ENCODE measurements at regions of chr1 and their contacts with region 1.

Region 1: GRCh38 chr1:218330043-218330623 is 15.0 kb upstream of the TGFB2 start:
- DNase-seq: no peak
- ATAC-seq: peak; percentile 47

Region 2: DNA sequence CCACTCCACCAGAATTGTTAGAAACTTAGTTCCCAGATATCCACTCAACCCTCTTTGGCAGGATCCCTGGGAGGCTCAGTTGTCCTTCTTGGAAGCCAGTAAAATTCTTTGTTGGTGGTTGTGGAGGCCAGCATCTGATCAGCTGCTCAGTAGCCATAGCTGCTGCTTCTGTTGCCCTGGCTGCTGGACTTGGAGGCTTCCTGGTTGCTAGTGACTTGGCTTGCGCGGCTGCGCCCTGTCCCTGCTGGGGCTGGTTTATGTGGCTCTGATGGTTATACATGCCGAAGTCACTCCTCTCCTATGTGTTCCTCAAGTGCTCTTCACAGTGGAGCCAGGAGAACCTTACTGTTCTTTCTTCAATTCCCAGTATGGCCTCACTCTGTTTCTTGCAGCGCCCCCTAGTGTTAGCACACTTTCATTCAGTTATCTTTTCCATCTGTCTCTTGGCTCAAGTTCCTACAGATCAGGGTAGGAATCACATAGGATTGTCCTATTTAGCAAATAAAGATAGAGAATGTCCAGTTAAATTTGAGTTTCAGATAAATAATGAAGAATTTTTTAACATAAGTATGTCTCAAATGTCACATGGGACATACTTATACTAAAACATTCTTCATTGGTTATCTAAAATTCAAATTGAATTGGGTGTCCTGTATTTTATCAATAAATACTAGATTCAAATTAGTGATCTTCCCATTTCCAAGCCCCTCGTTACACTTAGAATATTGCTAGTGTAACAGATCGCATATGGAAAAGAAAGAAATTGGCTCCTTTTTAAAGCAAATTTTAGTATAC is 191.4 kb after region 1 on chr1:
- intact Hi-C with region 1: loop called in 1 of 2 experiments (anchors 5 kb)
- DNase-seq: peak in 1 of 2 donors; percentile 51
- ATAC-seq: no peak

Region 3: GRCh38 chr1:219416594-219417238 is 1086.6 kb after region 1 on chr1:
- intact Hi-C with region 1: loop called in 1 of 2 experiments (anchors 10 kb)
- DNase-seq: peak in 1 of 2 donors; percentile 68
- ATAC-seq: peak; percentile 63

Region 4: GRCh38 chr1:219566951-219567947 is 1237.1 kb after region 1 on chr1:
- intact Hi-C with region 1: loop called in 1 of 2 experiments (anchors 10 kb)
- DNase-seq: no peak
- ATAC-seq: no peak

Region 5: GRCh38 chr1:219812491-219813203 is 1482.5 kb after region 1 on chr1:
- intact Hi-C with region 1: loop called in 1 of 2 experiments (anchors 10 kb)
- DNase-seq: peak; percentile 10 to 26
- ATAC-seq: peak; percentile 76